Right ventricle myocardium inferior (tissue), 1 donor: ENCODE measurements at regions of chr2 and their contacts with region 1.

Region 1: DNA sequence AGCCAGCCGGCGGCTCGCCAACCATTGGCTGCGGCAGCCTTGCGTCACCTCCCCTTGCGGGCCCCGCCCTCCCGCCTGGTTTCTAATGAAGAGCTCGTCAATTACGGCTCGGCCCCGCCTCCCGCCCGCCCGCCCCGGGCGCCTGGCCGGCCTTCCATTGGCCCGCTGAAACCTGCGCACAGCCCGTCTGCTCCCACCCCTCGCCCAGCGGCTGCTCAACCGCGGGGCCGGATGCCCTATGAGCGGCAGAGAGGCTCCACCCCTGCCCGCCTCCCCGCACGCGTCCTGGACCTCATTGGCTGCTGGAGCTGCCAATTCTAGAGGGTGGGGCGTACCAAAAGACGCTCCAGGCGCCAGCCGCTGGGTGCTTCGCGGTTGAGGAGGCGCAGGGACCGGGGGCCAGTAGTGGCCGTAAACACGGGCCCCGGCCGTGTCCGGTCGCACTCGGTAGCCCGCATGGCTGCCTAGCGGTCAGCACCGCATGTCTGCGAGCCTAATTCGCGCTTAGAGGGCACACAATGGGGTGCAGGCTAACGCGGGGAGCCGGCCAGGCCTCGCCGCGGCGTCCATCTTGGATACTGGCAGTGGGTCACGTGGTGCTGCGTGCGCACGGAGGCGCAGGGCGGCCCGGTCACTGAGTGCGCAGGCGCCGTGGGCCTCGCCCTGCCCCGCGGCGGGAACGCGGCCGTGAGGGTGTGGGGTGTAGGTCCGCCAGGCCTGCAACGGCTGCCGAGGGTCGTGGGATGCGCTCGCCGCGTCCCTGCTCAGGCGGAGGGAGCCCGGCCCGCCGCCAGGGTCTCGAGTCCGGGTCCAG is 454 bp upstream of the HDAC4 start:
- DNase-seq: peak; percentile 100
- ATAC-seq: peak; percentile 97

Region 2: DNA sequence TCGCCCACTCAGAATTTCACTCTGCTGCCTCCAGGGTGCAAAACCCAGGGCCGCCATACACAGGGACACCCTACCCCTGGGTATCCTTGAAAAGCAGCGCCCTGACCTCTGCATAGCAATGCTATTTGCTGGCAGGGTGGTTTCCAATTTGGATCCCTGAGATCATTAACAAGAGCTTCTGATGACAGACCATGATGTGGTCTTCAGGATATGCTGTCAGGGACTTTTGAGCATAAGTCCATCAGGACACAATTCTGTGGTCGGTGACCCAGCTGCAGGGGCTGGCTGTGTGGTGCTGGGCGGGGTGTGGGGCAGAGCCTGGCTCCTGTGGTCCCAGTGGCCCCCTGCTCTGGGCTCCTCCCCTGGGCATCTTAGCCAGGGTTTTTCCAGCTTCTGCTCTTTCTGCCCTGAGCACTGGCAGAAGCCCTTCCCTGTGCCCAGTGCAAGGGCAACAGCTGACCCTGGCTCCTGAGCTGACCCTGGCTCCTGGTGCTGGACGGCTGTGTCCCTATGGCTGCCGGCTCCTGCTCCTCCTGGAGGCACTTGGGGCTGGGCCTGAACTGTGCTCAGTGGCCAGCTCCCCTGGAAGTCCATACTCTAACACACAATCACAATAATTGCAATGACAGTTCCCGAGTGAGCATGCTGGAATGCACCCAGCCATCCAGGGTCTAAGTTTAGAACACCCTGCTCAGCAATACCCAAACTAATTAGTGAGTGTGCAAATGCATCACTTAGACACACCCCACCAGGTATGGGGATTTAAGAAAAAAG is 271.9 kb before region 1 on chr2:
- intact Hi-C with region 1: loop called (anchors 5 kb)
- DNase-seq: no peak
- ATAC-seq: peak; percentile 53

Region 3: DNA sequence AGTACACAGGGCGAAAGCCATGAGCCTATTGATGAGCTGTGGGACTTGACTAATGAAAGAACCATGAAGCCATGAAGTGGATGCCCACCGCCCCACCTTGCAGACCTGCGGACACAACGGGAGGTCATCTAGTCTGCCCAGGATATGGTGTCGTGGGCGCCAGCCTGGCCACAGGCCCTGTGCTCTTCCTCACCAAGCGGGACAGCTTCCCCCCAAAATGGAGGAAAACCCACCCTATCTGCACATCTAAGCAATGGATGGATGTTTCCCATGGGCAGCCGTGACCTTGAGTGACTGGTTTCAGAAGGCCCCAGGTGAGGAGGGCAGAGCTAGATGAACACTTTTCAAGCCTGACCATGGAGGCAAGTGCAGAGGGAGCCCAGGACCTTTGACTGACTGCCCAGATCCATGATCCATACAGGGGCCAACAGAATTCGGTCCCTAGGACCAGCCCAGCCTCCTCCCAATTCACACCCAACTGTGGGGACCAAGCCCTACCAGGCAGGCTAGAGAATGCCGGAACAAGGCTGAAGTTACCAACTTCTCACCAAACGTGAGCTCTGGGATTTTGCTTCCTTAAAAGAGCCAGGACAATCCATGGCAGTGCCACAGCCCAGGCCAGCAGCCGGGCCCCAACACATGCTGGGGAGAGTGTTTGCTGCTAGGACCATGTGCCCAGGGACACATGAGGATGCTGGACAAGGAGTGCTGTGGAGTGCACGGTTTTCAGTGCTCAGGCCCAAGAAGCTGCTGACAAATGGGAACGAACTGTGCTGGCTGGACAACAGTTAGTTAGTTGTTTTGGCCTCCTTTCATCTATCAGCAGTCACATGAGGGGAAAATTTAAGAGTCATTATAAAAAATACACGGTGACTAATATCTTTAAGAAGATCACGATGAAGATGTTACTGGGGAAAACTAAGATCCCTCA is 249.8 kb before region 1 on chr2:
- intact Hi-C with region 1: loop called (anchors 5 kb)
- DNase-seq: no peak
- ATAC-seq: peak; percentile 41

Region 4: GRCh38 chr2:239225871-239226561 is 175.3 kb before region 1 on chr2:
- intact Hi-C with region 1: loop called (anchors 5 kb)
- DNase-seq: no peak
- ATAC-seq: no peak

Region 5: GRCh38 chr2:239316562-239317465 is 84.5 kb before region 1 on chr2:
- intact Hi-C with region 1: loop called (anchors 2 kb)
- DNase-seq: peak; percentile 88
- ATAC-seq: peak; percentile 89

Region 6: DNA sequence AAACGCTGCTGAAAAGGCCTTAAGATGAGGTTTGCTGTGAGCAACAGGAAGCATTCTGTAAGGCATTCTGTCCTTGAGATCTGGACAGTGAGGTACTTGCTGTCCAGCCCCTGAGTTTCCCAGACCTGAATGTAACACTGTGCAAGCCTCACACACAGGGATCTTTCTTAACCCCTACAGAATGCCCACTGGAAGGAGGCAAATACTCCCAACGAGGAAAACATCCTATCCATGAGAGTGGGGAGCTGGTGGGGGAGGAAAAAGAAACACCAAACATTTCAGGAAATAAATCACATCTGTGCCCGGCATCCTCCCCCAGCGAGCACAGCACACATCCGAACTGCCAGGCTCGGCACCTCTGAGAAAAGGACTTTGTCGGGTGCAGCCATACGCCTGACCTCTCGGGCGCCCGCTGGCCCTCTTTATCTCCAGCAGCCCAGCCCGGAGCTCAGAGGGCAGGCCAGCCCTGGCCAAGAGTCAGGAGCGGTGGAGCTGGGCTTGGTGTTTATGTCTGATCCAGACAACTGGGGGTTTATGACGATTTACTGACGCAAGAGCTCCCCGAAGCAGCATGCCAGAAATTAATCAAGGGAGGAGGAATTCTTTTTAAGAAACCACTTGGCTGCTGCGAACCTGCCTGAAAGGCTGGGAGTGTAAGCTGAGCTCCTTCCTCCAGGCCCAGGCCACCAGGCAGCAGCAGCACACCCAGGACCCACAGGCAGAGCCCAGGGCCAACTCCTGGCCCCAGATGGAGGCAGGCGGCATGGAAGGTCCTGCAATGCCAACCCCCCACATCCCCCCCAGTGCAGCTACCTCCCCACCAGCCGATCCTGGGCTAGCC is 72.7 kb before region 1 on chr2:
- intact Hi-C with region 1: loop called (anchors 2 kb)
- DNase-seq: peak; percentile 92
- ATAC-seq: peak; percentile 89